Activated T-helper 1 cell treated with anti-CD3 and anti-CD28 coated beads, Interleukin-12 subunit alpha, Interleukin-12 subunit beta, Interleukin-2, Interleukin-4 antibody, amounts not matched to agents 30 ng/mL and 10 ng/mL and 1 ng/mL, durations not matched to agents 14 hours and 24 hours and 36 hours (primary cell): ENCODE measurements at regions of chr9 and their contacts with region 1.

Region 1: DNA sequence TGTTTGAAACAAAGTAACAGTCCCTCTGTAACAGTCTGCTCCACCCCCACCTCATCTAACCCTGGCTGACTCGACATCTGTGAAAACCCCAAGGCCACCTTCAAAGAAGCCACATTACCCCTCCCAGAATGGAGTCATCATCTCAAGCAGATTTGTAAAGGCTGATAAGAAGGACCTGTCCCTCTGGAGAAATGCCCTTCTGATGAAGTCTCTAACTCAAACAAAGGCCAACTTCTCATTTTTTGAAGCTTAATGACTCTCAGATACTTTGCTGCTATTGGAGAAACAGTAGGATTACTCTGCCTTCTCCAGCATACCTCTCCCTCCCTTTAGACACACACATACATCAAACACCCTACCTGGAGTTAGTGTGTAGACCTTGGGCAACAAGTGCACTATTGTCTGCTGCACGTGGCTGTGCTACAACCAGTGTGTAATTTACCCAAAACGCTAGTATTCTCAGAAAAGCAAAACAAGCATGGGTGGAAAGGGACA is 5.3 kb upstream of the SUSD1 start:
- DNase-seq: peak; percentile 62
- H3K4me3 Mint-ChIP-seq: peak overlapping the region; percentile 19
- H3K27ac Mint-ChIP-seq: peak overlapping the region; percentile 66
- H3K4me1 Mint-ChIP-seq: peaks cover 64% of the 10 kb centered on the region
- H3K27me3 Mint-ChIP-seq: no peaks in the 10 kb centered on the region

Region 2: DNA sequence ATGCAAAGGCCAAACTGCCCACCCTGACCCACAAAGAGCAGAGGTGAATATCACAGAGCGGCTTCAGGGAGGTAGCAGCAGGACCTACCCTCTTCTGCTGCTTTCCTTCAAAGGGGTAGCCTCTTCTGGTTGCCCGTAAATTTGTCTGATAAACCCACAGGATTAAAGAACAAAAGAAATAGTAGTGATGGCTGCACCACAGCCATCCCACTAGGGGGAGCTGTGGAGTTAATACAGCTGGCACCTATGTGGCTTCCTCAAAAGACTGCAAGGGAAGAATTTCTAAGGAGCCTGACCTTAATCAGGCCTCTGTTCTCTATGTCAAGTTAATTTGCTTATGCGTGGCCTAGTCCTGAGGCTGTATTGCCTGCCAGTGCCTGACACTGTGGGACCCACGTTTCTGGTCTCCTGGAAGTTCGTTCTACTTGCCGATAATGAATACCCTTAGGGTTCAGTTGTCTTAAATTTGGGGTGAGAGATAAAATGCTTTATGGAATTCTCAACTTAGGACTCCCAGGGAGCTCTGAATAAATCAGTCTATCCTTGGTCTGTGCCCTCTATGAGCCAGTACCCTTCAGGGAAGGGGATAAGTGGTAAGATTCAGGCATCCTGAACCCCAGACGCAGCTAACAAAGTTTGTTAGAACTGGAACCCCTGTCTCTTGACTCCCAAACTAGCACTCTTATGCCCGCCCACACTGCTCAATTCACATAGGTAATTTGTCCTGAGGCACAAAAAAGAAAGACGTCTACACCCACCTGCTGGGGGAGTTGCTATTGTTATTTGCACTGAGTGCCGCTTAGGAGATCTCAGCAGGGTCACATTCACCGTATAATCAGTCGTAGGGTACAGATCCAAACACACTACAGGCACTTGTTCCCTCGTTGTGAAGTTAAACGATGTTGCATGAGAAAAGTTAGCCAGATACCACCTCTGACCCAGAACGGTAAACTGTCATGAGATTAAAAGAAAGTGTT is 82.4 kb before region 1 on chr9:
- intact Hi-C with region 1: loop called (anchors 5 kb)
- DNase-seq: peak; percentile 54
- H3K4me3 Mint-ChIP-seq: no peak overlapping the region
- H3K27ac Mint-ChIP-seq: no peak overlapping the region
- H3K4me1 Mint-ChIP-seq: peaks cover 32% of the 10 kb centered on the region
- H3K27me3 Mint-ChIP-seq: peaks cover 2% of the 10 kb centered on the region

Region 3: GRCh38 chr9:112158656-112159367 is 21.6 kb before region 1 on chr9:
- intact Hi-C with region 1: loop called (anchors 2 kb)
- DNase-seq: no peak
- H3K4me3 Mint-ChIP-seq: no peak overlapping the region
- H3K27ac Mint-ChIP-seq: no peak overlapping the region
- H3K4me1 Mint-ChIP-seq: peaks cover 7% of the 10 kb centered on the region
- H3K27me3 Mint-ChIP-seq: peaks cover 2% of the 10 kb centered on the region

Region 4: DNA sequence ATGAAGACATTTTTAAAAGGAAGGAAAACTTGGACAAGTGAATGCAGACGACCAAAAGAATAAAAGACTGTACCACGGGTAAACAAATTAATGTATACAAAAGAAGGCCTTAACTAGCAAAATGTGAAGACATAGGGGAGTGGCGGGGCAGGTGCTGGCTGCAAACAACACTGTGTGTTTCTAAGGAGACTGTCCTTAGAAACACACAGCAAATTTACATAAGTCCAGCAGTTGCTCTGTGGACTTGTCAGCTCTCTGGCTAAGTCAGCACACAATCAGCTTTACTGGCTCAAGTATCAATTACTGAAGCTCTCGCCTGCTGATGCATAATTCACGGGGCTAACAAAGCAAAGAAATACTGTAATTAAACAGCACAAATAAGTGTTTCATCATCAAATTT is 128.2 kb after region 1 on chr9:
- intact Hi-C with region 1: no loop called
- DNase-seq: no peak
- H3K4me3 Mint-ChIP-seq: no peak overlapping the region
- H3K27ac Mint-ChIP-seq: no peak overlapping the region
- H3K4me1 Mint-ChIP-seq: peaks cover 10% of the 10 kb centered on the region
- H3K27me3 Mint-ChIP-seq: no peaks in the 10 kb centered on the region